ENCODE measurements at regions of chr19 and their contacts with region 1.

Region 1: DNA sequence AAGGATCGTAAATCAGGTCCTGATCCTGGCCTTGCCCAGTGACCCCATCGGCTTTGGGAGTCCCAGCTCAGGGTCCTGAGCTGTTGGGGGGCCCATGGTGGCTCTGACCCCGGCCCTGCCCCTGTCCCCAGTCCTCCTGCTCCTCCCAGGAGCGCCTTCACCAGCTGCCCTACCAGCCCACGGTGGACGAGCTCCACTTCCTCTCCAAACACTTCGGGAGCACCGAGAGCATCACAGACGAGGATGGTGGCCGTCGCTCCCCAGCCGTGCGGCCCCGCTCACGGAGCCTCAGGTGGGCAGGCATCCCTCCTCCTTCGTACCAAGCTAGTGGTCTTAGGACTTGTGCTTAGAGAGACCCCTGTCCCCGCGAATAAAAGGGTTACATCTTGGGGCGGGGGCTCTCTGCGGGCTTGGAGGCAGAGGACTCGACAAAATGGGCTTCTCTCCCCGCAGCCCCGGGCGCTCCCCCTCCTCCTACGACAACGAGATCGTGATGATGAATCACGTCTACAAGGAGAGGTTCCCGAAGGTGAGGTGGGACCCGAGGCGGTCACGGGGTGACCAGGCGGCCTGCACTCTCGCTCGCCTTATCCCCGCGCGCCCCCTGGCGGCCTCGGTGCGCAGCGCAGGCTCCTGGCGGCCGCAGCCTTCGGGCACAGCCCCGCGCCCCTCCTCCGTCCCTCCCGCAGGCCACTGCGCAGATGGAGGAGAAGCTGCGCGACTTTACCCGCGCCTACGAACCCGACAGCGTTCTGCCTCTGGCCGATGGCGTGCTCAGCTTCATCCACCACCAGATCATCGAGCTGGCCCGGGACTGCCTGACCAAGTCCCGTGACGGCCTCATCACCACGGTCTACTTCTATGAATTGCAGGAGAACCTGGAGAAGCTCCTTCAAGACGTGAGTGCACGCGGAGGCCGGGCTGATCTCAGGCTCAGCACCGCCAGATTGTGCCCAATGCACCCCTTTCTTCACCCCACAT is 9.1 kb downstream of the MAST1 start:
- DNase-seq: peak; percentile 91
- ATAC-seq: peak; percentile 99
- H3K4me3 Mint-ChIP-seq: peak overlapping the region; percentile 67
- H3K27ac Mint-ChIP-seq: peak overlapping the region; percentile 63
- H3K4me1 Mint-ChIP-seq: peaks cover 3% of the 10 kb centered on the region
- H3K27me3 Mint-ChIP-seq: peaks cover 25% of the 10 kb centered on the region
- CTCF ChIP-seq: peak; percentile 100

Region 2: DNA sequence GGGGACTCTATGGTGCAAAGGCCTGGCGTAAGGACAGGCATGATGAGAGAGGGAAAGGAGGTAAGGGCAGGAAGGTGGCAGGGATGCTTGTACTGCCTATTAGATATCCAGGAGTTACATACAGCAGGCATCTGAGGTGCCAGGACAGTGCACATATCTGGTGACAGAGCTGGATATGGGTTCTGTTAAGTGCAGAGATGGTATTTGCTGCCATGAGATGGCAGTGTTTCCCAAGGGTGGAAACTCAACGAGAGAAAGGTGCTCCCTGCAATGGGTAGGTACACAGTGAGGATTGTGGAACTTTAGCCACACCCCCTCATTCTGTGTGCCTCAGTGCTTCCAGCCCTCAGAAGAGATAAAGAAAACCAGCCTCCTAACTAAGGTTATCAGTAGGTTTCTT is 130.6 kb before region 1 on chr19:
- CTCF ChIA-PET with region 1: interaction called, 15 read pairs
- POLR2A ChIA-PET with region 1: no interaction called
- intact Hi-C with region 1: no loop called
- DNase-seq: peak; percentile 49
- ATAC-seq: peak; percentile 67
- H3K4me3 Mint-ChIP-seq: no peak overlapping the region
- H3K27ac Mint-ChIP-seq: peak overlapping the region; percentile 20
- H3K4me1 Mint-ChIP-seq: peaks cover 23% of the 10 kb centered on the region
- H3K27me3 Mint-ChIP-seq: no peaks in the 10 kb centered on the region
- CTCF ChIP-seq: peak; percentile 28

Region 3: DNA sequence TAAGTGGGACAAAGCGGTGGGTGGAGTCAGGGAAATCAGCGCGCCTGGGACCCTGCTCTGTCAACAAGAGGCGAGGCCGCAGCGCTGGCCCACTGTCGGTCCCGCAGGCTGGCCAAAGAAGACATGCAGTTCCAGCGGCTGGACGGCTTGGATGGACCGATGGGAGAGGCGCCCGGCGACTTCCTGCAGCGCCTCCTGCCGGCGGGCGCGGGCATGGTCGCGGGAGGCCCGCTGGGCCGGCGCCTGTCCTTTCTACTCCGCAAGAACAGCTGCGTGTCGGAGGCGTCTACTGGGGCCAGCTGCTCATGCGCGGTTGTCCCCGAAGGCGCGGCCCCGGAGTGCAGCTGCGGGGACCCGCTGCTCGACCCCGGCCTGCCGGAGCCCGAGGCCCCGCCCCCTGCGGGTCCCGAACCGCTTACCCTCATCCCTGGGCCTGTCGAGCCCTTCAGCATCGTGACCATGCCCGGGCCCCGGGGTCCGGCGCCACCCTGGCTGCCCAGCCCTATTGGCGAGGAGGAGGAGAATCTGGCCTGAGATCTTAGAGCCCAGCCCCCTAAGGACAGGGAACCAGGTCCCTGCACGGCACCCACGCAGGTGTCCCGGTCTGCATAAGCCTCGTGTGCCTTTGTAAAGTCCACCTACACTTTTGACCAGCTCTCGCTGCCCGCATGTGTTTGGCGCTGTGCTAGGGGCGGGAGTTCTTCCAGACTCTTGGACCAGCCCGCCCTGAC is 89.7 kb before region 1 on chr19:
- CTCF ChIA-PET with region 1: interaction called, 118 read pairs
- POLR2A ChIA-PET with region 1: interaction called, 3 read pairs
- intact Hi-C with region 1: loop called (anchors 5 kb)
- DNase-seq: peak; percentile 77
- ATAC-seq: peak; percentile 83
- H3K4me3 Mint-ChIP-seq: peak overlapping the region; percentile 41
- H3K27ac Mint-ChIP-seq: no peak overlapping the region
- H3K4me1 Mint-ChIP-seq: peaks cover 10% of the 10 kb centered on the region
- H3K27me3 Mint-ChIP-seq: peaks cover 18% of the 10 kb centered on the region
- CTCF ChIP-seq: peak; percentile 98

Region 4: GRCh38 chr19:12796146-12797071 is 51.0 kb before region 1 on chr19:
- CTCF ChIA-PET with region 1: interaction called, 49 read pairs
- POLR2A ChIA-PET with region 1: interaction called, 7 read pairs
- intact Hi-C with region 1: no loop called
- DNase-seq: peak; percentile 80
- ATAC-seq: peak; percentile 15
- H3K4me3 Mint-ChIP-seq: peak overlapping the region; percentile 68
- H3K27ac Mint-ChIP-seq: peak overlapping the region; percentile 87
- H3K4me1 Mint-ChIP-seq: peaks cover 34% of the 10 kb centered on the region
- H3K27me3 Mint-ChIP-seq: no peaks in the 10 kb centered on the region
- CTCF ChIP-seq: peak; percentile 93

Region 5: DNA sequence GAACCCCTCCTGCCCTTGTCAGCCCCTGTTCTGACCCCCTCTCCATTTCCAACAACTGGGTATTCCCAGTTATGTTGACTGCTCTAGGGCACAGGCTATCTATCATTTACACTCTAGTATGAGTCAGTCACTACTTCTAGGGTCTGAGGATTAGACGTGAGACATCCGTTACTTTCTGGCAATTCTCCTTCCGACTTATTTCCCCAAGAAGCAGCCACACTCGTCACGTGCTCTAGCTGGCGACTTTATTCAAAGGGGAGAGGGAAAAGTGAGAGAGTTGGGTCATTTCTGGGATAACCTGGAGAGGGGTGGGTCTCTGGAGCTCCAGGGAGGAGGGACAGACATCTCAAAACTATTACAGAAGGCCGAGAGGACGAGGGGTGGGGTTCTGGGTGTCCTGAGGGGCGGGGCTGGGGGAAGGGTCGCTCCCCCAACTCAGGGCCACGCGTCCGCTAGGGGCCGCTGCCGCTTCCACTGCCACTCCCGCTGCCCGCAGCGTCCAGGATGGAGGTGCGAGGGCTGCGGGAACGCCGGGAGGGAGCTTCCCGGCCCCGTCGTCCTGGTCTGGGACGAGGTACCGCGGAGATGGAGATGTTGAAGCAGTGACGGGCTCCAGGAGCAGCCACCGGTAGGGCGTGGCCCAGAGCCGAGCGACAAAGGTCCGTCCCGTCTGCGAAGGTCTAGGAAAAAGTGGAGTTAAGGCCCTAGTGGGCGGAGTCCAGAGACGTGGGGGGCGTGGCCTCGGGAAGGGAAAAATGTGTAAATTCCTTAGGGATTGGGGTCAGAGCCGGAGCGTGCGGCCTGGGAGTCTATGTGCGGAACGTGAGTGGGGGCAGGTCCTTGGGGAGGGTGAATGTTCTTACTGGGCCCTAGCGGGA is 22.0 kb before region 1 on chr19:
- CTCF ChIA-PET with region 1: interaction called, 35 read pairs
- POLR2A ChIA-PET with region 1: no interaction called
- intact Hi-C with region 1: no loop called
- DNase-seq: peak; percentile 45
- ATAC-seq: peak; percentile 27
- H3K4me3 Mint-ChIP-seq: no peak overlapping the region
- H3K27ac Mint-ChIP-seq: no peak overlapping the region
- H3K4me1 Mint-ChIP-seq: peaks cover 4% of the 10 kb centered on the region
- H3K27me3 Mint-ChIP-seq: peaks cover 39% of the 10 kb centered on the region
- CTCF ChIP-seq: peak; percentile 51

Region 6: GRCh38 chr19:12890787-12891552 is 43.5 kb after region 1 on chr19 and contains the start of gene GCDH:
- CTCF ChIA-PET with region 1: interaction called, 13 read pairs
- POLR2A ChIA-PET with region 1: no interaction called
- intact Hi-C with region 1: no loop called
- DNase-seq: peak; percentile 99
- ATAC-seq: peak; percentile 95
- H3K4me3 Mint-ChIP-seq: peak within 1 kb of the TSS; percentile 100
- H3K27ac Mint-ChIP-seq: peak within 1 kb of the TSS; percentile 95
- H3K4me1 Mint-ChIP-seq: peaks cover 21% of the 10 kb centered on the region
- H3K27me3 Mint-ChIP-seq: no peaks in the 10 kb centered on the region
- CTCF ChIP-seq: no peak
- total RNA-seq, gene GCDH: 37.5 to 43.8 TPM